T-cell (primary cell): ENCODE measurements at regions of chr4 and their contacts with region 1.

Region 1: GRCh38 chr4:38872604-38873006 is 5.0 kb downstream of the FAM114A1 start:
- DNase-seq: no peak
- ATAC-seq: no peak
- H3K4me3 ChIP-seq: no peak overlapping the region
- H3K4me3 Mint-ChIP-seq: no peak overlapping the region
- H3K27ac ChIP-seq: no peak overlapping the region
- H3K27ac Mint-ChIP-seq: no peak overlapping the region
- H3K4me1 ChIP-seq: peaks cover 0 to 7% of the 10 kb centered on the region in 2 experiments
- H3K4me1 Mint-ChIP-seq: peaks cover 1 to 12% (median 4%) of the 10 kb centered on the region in 3 donors
- H3K27me3 ChIP-seq: peaks cover 0 to 18% of the 10 kb centered on the region in 2 experiments
- H3K27me3 Mint-ChIP-seq: peaks cover 9 to 21% of the 10 kb centered on the region in 2 donors

Region 2: GRCh38 chr4:37767546-37767945 is 1105.1 kb before region 1 on chr4:
- CTCF ChIA-PET with region 1: no interaction called
- POLR2A ChIA-PET with region 1: no interaction called
- DNase-seq: no peak
- ATAC-seq: no peak
- H3K4me3 ChIP-seq: no peak overlapping the region
- H3K4me3 Mint-ChIP-seq: no peak overlapping the region
- H3K27ac ChIP-seq: no peak overlapping the region
- H3K27ac Mint-ChIP-seq: no peak overlapping the region
- H3K4me1 ChIP-seq: peaks cover 0 to 6% of the 10 kb centered on the region in 2 experiments
- H3K4me1 Mint-ChIP-seq: peaks cover 0 to 18% (median 5%) of the 10 kb centered on the region in 3 donors
- H3K27me3 ChIP-seq: no peaks in the 10 kb centered on the region
- H3K27me3 Mint-ChIP-seq: no peaks in the 10 kb centered on the region

Region 3: GRCh38 chr4:38768968-38769394 is 103.6 kb before region 1 on chr4:
- CTCF ChIA-PET with region 1: no interaction called
- POLR2A ChIA-PET with region 1: no interaction called
- DNase-seq: no peak
- ATAC-seq: no peak
- H3K4me3 ChIP-seq: no peak overlapping the region
- H3K4me3 Mint-ChIP-seq: no peak overlapping the region
- H3K27ac ChIP-seq: no peak overlapping the region
- H3K27ac Mint-ChIP-seq: no peak overlapping the region
- H3K4me1 ChIP-seq: no peaks in the 10 kb centered on the region
- H3K4me1 Mint-ChIP-seq: no peaks in the 10 kb centered on the region
- H3K27me3 ChIP-seq: peaks cover 0 to 2% of the 10 kb centered on the region in 2 experiments
- H3K27me3 Mint-ChIP-seq: peaks cover 0 to 3% of the 10 kb centered on the region in 2 donors

Region 4: DNA sequence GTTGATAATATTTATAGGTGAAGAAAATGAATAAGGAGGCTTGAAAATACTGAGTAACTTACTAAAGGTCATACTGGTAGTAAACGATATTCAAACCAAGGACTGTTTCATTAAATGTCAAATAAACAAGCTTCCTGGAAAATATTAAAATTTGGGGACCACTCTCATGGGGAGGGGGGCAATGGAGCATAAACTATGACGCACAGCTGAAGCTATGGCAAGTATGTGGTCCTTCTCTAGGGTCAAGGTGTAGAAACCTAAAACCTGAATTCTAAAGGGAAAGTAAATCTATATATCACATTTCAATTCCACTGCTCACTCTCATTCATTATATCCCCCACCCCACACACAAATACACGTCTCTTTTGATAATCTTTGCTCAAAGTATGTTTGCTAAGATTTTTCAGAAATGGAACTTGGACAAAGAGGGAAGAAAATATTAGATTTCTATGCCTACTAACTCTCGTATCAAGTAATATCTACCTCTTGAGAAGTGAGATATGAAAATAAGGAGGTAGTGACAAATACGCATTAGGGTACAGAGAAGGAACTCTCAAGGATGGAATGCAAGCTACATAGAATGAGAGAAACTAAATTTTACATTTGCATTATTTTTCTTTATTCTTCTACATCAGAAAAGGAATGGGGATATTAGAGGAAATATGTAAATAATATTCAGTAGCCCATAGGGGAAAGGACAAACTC is 1020.5 kb after region 1 on chr4:
- CTCF ChIA-PET with region 1: no interaction called
- POLR2A ChIA-PET with region 1: interaction called in 1 of 2 experiments, 16 read pairs
- DNase-seq: no peak
- ATAC-seq: no peak
- H3K4me3 ChIP-seq: no peak overlapping the region
- H3K4me3 Mint-ChIP-seq: no peak overlapping the region
- H3K27ac ChIP-seq: no peak overlapping the region
- H3K27ac Mint-ChIP-seq: no peak overlapping the region
- H3K4me1 ChIP-seq: no peaks in the 10 kb centered on the region
- H3K4me1 Mint-ChIP-seq: peaks cover 0 to 5% (median 3%) of the 10 kb centered on the region in 3 donors
- H3K27me3 ChIP-seq: no peaks in the 10 kb centered on the region
- H3K27me3 Mint-ChIP-seq: no peaks in the 10 kb centered on the region